Calu3 (cell line): ENCODE measurements at regions of chr6 and their contacts with region 1.

Region 1: GRCh38 chr6:130020907-130021629 is 2.7 kb downstream of the L3MBTL3 start:
- DNase-seq: peak; percentile 82
- H3K4me3 Mint-ChIP-seq: peak overlapping the region; percentile 90
- H3K27ac Mint-ChIP-seq: peak overlapping the region; percentile 56
- H3K4me1 Mint-ChIP-seq: no peaks in the 10 kb centered on the region
- H3K27me3 Mint-ChIP-seq: no peaks in the 10 kb centered on the region
- CTCF ChIP-seq: peak; percentile 67

Region 2: DNA sequence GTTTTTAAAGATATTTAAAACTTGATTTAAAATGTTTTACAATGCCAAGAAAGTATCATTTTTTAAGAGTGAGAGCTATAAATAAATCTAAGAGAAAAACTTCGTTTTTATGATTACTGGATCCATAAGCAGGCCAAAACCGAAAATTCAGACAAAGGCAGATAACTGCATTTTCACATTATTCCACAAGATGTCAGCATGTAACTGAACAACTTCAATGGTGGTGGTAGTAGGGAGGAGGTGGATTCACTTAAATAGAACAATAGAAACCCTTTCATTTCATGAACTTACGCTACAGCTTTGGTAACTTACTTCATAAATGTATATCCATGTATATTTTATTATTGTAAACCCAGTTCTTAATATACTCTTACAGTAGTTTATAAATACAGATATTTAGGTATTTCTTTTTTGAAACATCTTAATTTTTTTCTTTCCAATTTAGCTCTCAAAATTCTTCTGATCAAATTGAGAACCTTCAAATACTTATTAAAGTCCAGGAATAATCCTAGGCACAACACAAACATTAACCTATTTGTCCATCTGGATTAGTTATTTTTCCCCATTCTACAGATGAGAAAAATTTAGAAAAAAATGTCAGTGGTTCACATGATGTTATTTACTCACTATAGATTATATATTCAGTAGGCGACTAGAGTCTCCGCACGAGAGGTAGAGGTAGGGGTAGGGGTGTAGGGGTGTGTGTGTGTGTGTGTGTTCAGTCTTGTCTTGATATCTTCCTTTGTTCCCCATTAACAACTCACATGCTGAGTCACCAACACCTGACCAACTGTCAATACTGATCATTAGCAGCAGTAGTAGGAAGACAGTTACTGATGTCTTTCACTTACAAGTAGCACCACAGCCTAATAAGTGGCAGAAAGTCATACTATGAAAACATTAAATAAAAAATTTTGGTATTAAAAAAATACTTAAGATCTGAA is 422.6 kb before region 1 on chr6:
- CTCF ChIA-PET with region 1: interaction called, 3 read pairs
- intact Hi-C with region 1: loop called (anchors 10 kb)
- DNase-seq: peak; percentile 21
- H3K4me3 Mint-ChIP-seq: no peak overlapping the region
- H3K27ac Mint-ChIP-seq: peak overlapping the region; percentile 16
- H3K4me1 Mint-ChIP-seq: no peaks in the 10 kb centered on the region
- H3K27me3 Mint-ChIP-seq: no peaks in the 10 kb centered on the region
- CTCF ChIP-seq: peak; percentile 50

Region 3: DNA sequence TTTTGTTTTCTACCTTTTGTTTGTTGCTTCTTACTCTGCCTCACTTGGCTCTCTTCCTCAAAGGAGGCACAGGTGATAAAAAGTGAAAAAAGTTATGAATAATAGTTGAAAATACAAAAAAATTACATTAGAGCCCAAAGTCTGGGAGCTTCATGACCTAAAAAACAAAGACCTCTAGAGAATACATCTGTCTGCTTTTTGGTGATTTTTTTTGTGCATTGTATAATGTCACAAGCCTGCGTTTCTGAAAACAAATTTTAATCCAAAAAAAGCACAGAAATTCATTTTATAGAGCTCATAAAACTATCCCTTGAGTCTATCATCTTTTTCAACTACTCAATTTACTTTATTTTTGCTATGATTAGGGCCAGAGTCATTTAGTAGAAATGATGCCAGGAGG is 269.7 kb before region 1 on chr6:
- CTCF ChIA-PET with region 1: interaction called, 3 read pairs
- intact Hi-C with region 1: loop called (anchors 1 kb)
- DNase-seq: no peak
- H3K4me3 Mint-ChIP-seq: no peak overlapping the region
- H3K27ac Mint-ChIP-seq: no peak overlapping the region
- H3K4me1 Mint-ChIP-seq: peaks cover 34% of the 10 kb centered on the region
- H3K27me3 Mint-ChIP-seq: no peaks in the 10 kb centered on the region
- CTCF ChIP-seq: no peak

Region 4: DNA sequence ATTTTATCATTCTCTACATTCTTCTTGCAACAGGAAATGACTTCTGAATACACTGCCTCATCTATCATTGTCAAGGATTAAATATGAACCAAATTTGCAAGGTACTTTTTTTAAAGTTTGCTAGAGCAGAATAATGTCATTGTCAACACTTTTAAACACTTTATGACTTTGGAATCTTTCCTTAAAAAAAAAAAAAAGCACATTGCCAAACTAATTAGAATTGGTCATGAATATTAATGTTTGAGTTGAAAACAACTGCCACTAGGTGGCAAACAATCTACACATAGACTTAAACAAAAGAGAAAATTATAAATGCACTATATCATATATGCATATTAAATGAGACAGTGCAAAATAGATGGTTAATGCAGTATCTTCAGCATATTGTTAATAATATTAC is 127.4 kb before region 1 on chr6:
- CTCF ChIA-PET with region 1: no interaction called
- intact Hi-C with region 1: loop called (anchors 1 kb)
- DNase-seq: no peak
- H3K4me3 Mint-ChIP-seq: no peak overlapping the region
- H3K27ac Mint-ChIP-seq: no peak overlapping the region
- H3K4me1 Mint-ChIP-seq: peaks cover 10% of the 10 kb centered on the region
- H3K27me3 Mint-ChIP-seq: no peaks in the 10 kb centered on the region
- CTCF ChIP-seq: peak; percentile 32

Region 5: DNA sequence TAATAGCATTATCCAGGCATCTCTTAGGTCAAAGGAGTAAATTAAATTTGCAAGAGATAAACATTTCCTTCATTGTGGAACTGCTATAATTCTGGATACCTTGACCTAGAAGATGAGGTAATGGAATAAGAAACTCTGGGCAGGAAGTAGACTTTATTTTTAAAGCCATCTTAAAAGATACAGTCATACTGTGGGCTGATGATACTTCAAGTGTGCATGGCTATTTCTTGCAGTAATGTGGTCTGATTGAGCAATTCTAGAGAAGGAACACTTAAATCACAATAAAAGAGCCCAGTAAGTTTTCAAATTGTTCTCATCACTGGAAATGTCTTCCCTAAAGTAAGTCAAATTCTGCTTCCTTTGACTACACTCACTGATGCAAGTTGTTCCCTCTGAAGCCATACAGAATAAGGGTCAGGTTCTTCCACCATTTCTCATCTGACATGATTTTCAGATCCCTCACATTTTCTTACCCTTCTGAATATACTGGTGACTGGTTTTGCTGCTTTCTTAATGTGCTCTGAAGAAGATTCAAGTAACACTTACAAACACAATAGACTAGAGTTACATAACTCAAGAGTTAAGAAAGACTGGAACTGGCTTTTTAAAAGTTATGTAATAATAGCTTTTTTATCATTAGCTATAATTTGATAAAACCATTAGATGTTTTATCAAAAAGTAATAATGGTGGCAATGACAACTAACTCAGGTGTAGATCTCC is 97.4 kb before region 1 on chr6:
- CTCF ChIA-PET with region 1: no interaction called
- intact Hi-C with region 1: no loop called
- DNase-seq: no peak
- H3K4me3 Mint-ChIP-seq: no peak overlapping the region
- H3K27ac Mint-ChIP-seq: no peak overlapping the region
- H3K4me1 Mint-ChIP-seq: peaks cover 10% of the 10 kb centered on the region
- H3K27me3 Mint-ChIP-seq: no peaks in the 10 kb centered on the region
- CTCF ChIP-seq: no peak